Colonic mucosa (tissue), 4 donors: ENCODE measurements at regions of chr2 and their contacts with region 1.

Region 1: GRCh38 chr2:203225423-203226039 is 13.3 kb upstream of the CYP20A1 start:
- DNase-seq: no peak
- H3K4me3 ChIP-seq: no peak overlapping the region
- H3K27ac ChIP-seq: no peak overlapping the region
- H3K4me1 ChIP-seq: no peaks in the 10 kb centered on the region
- H3K27me3 ChIP-seq: no peaks in the 10 kb centered on the region
- CTCF ChIP-seq: peak; percentile 71

Region 2: GRCh38 chr2:203453858-203454451 is 228.4 kb after region 1 on chr2:
- intact Hi-C with region 1: loop called (anchors 10 kb)
- DNase-seq: peak; percentile 35
- H3K4me3 ChIP-seq: no peak overlapping the region
- H3K27ac ChIP-seq: no peak overlapping the region
- H3K4me1 ChIP-seq: no peaks in the 10 kb centered on the region
- H3K27me3 ChIP-seq: no peaks in the 10 kb centered on the region
- CTCF ChIP-seq: peak; percentile 62

Region 3: GRCh38 chr2:203814661-203815540 is 589.4 kb after region 1 on chr2:
- intact Hi-C with region 1: loop called (anchors 5 kb)
- DNase-seq: peak; percentile 71
- H3K4me3 ChIP-seq: no peak overlapping the region
- H3K27ac ChIP-seq: peak overlapping the region; percentile 62
- H3K4me1 ChIP-seq: peaks cover 4% of the 10 kb centered on the region
- H3K27me3 ChIP-seq: no peaks in the 10 kb centered on the region
- CTCF ChIP-seq: peak; percentile 81